Naive thymus-derived CD4-positive, alpha-beta T cell (primary cell): ENCODE measurements at regions of chr2 and their contacts with region 1.

Region 1: GRCh38 chr2:176638167-176639015 is 369.1 kb downstream of the MTX2 start:
- DNase-seq: peak in 8 of 9 donors; percentile 28 to 67 (median 50)
- ATAC-seq: peak; percentile 87
- H3K4me3 ChIP-seq: peak overlapping the region; percentile 45
- H3K4me3 Mint-ChIP-seq: peak overlapping the region in 9 of 10 donors; percentile 55 to 81 (median 70)
- H3K27ac ChIP-seq: no peak overlapping the region
- H3K27ac Mint-ChIP-seq: no peak overlapping the region
- H3K4me1 ChIP-seq: no peaks in the 10 kb centered on the region
- H3K4me1 Mint-ChIP-seq: peaks cover 0 to 10% (median 3%) of the 10 kb centered on the region in 7 donors
- H3K27me3 ChIP-seq: peaks cover 3 to 10% of the 10 kb centered on the region in 2 donors
- H3K27me3 Mint-ChIP-seq: peaks cover 53 to 78% (median 71%) of the 10 kb centered on the region in 5 donors

Region 2: DNA sequence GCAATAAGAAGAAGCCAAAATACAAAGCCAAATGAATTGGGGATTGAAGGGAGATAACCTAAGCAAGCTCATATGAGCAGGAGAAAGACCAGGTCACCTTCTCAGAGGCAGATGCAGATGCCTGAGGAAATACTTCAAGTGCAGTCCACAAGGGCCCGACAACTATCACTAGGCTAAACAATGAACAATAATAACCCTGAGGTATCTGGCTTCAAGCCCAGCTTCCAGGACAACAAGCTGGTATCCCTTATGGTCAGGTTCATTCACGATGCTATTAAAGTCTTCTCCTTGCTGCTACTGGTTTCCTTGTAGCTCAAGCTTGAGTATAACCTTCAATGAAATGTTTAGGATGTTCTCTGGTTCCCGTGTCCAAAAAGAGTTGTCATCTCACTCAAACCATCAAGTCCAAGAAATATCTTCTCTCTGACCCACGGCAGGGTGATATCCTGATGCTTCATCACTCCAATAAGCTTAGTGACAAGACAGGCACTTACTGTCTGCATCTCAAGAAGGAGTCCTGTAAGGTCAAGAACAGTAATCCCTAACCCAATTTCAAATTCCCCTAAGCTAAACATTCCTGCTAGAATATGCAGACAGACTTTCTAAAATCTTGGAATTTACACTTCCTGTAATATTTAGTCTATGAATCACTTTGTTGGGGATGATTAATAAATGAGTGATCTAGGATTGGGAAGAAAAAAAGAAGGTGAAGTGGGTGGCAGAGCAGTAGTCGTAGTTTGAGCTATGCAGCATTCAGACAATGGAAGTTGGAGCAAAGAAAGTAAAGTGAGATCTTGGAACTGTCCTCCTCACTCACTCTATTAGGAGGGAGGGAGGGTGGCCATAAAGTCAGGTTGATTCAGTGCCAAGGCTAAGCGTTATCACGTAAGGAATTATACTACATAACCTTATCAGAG is 1666.3 kb before region 1 on chr2:
- CTCF ChIA-PET with region 1: no interaction called
- POLR2A ChIA-PET with region 1: no interaction called
- intact Hi-C with region 1: no loop called
- DNase-seq: no peak
- ATAC-seq: no peak
- H3K4me3 ChIP-seq: no peak overlapping the region
- H3K4me3 Mint-ChIP-seq: no peak overlapping the region
- H3K27ac ChIP-seq: no peak overlapping the region
- H3K27ac Mint-ChIP-seq: no peak overlapping the region
- H3K4me1 ChIP-seq: peaks cover 0 to 5% of the 10 kb centered on the region in 2 donors
- H3K4me1 Mint-ChIP-seq: peaks cover 0 to 24% (median 13%) of the 10 kb centered on the region in 7 donors
- H3K27me3 ChIP-seq: no peaks in the 10 kb centered on the region
- H3K27me3 Mint-ChIP-seq: peaks cover 0 to 28% (median 8%) of the 10 kb centered on the region in 5 donors

Region 3: GRCh38 chr2:175690113-175690837 is 948.1 kb before region 1 on chr2:
- CTCF ChIA-PET with region 1: no interaction called
- POLR2A ChIA-PET with region 1: no interaction called
- intact Hi-C with region 1: loop called (anchors 1 kb)
- DNase-seq: peak in 7 of 9 donors; percentile 5 to 44 (median 28)
- ATAC-seq: peak; percentile 61
- H3K4me3 ChIP-seq: no peak overlapping the region
- H3K4me3 Mint-ChIP-seq: no peak overlapping the region
- H3K27ac ChIP-seq: no peak overlapping the region
- H3K27ac Mint-ChIP-seq: no peak overlapping the region
- H3K4me1 ChIP-seq: no peaks in the 10 kb centered on the region
- H3K4me1 Mint-ChIP-seq: peaks cover 0 to 2% (median 0%) of the 10 kb centered on the region in 7 donors
- H3K27me3 ChIP-seq: no peaks in the 10 kb centered on the region
- H3K27me3 Mint-ChIP-seq: peaks cover 14 to 47% (median 32%) of the 10 kb centered on the region in 5 donors

Region 4: DNA sequence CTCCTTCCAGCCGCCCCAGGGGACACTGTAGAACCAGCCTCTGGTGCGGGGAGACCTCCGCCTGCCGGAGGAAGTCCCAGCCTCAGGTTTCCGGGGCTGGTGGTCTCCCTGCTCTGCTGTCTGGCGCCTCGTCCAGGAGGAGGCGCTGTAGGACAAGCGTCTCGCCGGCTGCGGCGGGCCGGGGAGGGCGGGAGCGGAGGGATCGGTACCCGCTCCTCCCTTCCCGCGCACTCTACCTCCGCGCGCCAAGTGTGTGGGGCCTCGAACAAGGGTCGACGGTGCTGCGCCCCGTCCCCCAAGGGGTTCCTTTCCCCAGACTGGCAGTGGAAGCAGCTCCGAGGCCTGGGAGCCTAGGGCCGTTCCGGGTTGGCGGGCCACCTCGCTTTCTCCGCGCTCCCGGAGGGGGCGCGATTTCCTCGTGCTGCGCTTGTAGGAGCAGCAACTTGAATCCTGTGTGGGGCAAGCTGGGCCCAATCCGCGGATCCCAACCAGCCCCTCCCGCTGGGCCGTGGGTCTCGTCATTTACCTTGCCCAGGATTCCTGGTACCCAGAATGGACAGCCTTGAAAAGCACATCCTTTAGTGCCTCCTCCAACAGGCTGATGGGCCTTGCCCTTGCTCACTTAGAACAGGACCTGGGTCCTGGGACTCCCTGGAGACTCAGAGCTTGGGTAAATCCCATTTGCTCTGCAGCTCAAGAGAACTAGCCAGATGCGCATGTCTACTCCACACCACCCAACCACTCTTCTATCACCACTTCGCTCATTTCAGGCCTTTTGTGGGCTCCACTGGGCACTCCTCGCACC is 497.7 kb before region 1 on chr2:
- CTCF ChIA-PET with region 1: no interaction called
- POLR2A ChIA-PET with region 1: no interaction called
- intact Hi-C with region 1: loop called in 1 of 2 experiments (anchors 1 kb)
- DNase-seq: peak; percentile 35 to 76 (median 61)
- ATAC-seq: peak; percentile 87
- H3K4me3 ChIP-seq: peak overlapping the region; percentile 36
- H3K4me3 Mint-ChIP-seq: peak overlapping the region in 9 of 10 donors; percentile 23 to 78 (median 43)
- H3K27ac ChIP-seq: no peak overlapping the region
- H3K27ac Mint-ChIP-seq: peak overlapping the region in 1 of 9 donors; percentile 0
- H3K4me1 ChIP-seq: peaks cover 3 to 26% of the 10 kb centered on the region in 2 donors
- H3K4me1 Mint-ChIP-seq: peaks cover 7 to 46% (median 36%) of the 10 kb centered on the region in 7 donors
- H3K27me3 ChIP-seq: peaks cover 16 to 51% of the 10 kb centered on the region in 2 donors
- H3K27me3 Mint-ChIP-seq: peaks cover 83 to 91% (median 88%) of the 10 kb centered on the region in 5 donors

Region 5: GRCh38 chr2:176269319-176270099 is 368.9 kb before region 1 on chr2 and contains the start of gene MTX2:
- CTCF ChIA-PET with region 1: no interaction called
- POLR2A ChIA-PET with region 1: no interaction called
- intact Hi-C with region 1: loop called (anchors 5 to 10 kb)
- DNase-seq: peak; percentile 48 to 80 (median 75)
- ATAC-seq: peak; percentile 92
- H3K4me3 ChIP-seq: peak within 1 kb of the TSS; percentile 97
- H3K4me3 Mint-ChIP-seq: peak within 1 kb of the TSS; percentile 95 to 99 (median 97)
- H3K27ac ChIP-seq: peak within 1 kb of the TSS; percentile 84
- H3K27ac Mint-ChIP-seq: peak within 1 kb of the TSS; percentile 70 to 97 (median 92)
- H3K4me1 ChIP-seq: peaks cover 7 to 8% of the 10 kb centered on the region in 2 donors
- H3K4me1 Mint-ChIP-seq: peaks cover 16 to 46% (median 39%) of the 10 kb centered on the region in 7 donors
- H3K27me3 ChIP-seq: no peaks in the 10 kb centered on the region
- H3K27me3 Mint-ChIP-seq: peaks cover 0 to 19% (median 9%) of the 10 kb centered on the region in 5 donors
- total RNA-seq, gene MTX2: 6.6 to 14.3 (median 9.3) TPM

Region 6: DNA sequence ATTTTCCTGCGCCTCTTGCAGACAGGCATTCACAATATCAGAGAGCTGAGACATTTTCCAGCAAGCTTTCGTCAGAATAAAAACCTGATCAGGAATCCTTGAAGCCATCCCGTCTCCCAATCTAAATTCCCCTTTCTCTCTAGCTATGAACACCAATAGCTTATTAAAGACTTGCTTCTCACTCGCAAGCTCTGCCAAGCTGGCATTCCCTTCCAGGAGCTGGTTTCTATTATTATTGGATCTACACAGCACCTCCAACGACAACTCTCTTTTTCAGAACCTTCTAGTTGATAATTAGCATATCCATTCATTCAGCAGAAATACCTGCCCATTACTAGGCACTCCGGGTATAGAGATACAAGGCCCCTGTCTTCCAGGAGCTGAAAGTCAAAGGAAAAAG is 18.9 kb before region 1 on chr2:
- CTCF ChIA-PET with region 1: no interaction called
- POLR2A ChIA-PET with region 1: no interaction called
- intact Hi-C with region 1: no loop called
- DNase-seq: no peak
- ATAC-seq: no peak
- H3K4me3 ChIP-seq: no peak overlapping the region
- H3K4me3 Mint-ChIP-seq: no peak overlapping the region
- H3K27ac ChIP-seq: no peak overlapping the region
- H3K27ac Mint-ChIP-seq: no peak overlapping the region
- H3K4me1 ChIP-seq: no peaks in the 10 kb centered on the region
- H3K4me1 Mint-ChIP-seq: no peaks in the 10 kb centered on the region
- H3K27me3 ChIP-seq: no peaks in the 10 kb centered on the region
- H3K27me3 Mint-ChIP-seq: peaks cover 28 to 64% (median 49%) of the 10 kb centered on the region in 5 donors

Region 7: DNA sequence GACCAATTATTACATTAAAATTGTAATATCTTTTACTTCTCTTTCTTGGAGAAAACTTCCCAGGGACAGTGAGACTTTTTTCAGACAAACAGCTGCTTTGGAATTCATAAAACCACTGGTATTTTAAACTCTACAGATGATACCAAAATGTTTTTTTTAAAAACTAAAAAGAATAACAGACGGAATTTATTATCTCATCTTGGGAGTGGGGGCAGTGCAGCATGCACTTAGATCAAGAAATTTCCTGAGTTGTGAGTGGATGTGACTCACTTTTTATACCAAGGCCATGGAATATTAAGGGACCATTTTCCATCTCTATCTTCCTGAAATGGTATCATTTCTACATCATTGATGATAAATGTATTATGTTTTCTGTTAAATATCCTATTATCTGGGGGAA is 151.4 kb after region 1 on chr2:
- CTCF ChIA-PET with region 1: no interaction called
- POLR2A ChIA-PET with region 1: no interaction called
- intact Hi-C with region 1: no loop called
- DNase-seq: no peak
- ATAC-seq: no peak
- H3K4me3 ChIP-seq: no peak overlapping the region
- H3K4me3 Mint-ChIP-seq: no peak overlapping the region
- H3K27ac ChIP-seq: no peak overlapping the region
- H3K27ac Mint-ChIP-seq: no peak overlapping the region
- H3K4me1 ChIP-seq: no peaks in the 10 kb centered on the region
- H3K4me1 Mint-ChIP-seq: no peaks in the 10 kb centered on the region
- H3K27me3 ChIP-seq: no peaks in the 10 kb centered on the region
- H3K27me3 Mint-ChIP-seq: peaks cover 6 to 25% (median 19%) of the 10 kb centered on the region in 5 donors

Region 8: GRCh38 chr2:176845694-176846093 is 207.3 kb after region 1 on chr2:
- CTCF ChIA-PET with region 1: no interaction called
- POLR2A ChIA-PET with region 1: no interaction called
- intact Hi-C with region 1: no loop called
- DNase-seq: no peak
- ATAC-seq: no peak
- H3K4me3 ChIP-seq: no peak overlapping the region
- H3K4me3 Mint-ChIP-seq: no peak overlapping the region
- H3K27ac ChIP-seq: no peak overlapping the region
- H3K27ac Mint-ChIP-seq: no peak overlapping the region
- H3K4me1 ChIP-seq: peaks cover 0 to 17% of the 10 kb centered on the region in 2 donors
- H3K4me1 Mint-ChIP-seq: peaks cover 0 to 19% (median 4%) of the 10 kb centered on the region in 7 donors
- H3K27me3 ChIP-seq: no peaks in the 10 kb centered on the region
- H3K27me3 Mint-ChIP-seq: peaks cover 0 to 7% (median 0%) of the 10 kb centered on the region in 5 donors